Pancreas (tissue), 10 donors: ENCODE measurements at regions of chr12 and their contacts with region 1.

Region 1: GRCh38 chr12:14845350-14845750 is 2.0 kb upstream of the ART4 start:
- DNase-seq: peak in 2 of 6 donors; percentile 39 to 66
- ATAC-seq: peak; percentile 36 to 69 (median 64)
- H3K4me3 ChIP-seq: no peak overlapping the region
- H3K27ac ChIP-seq: peak overlapping the region in 2 of 4 donors; percentile 50 to 55
- H3K4me1 ChIP-seq: peaks cover 32 to 54% (median 44%) of the 10 kb centered on the region in 3 donors
- H3K27me3 ChIP-seq: no peaks in the 10 kb centered on the region
- CTCF ChIP-seq: peak; percentile 20 to 66 (median 47)

Region 2: GRCh38 chr12:14928969-14929368 is 83.6 kb after region 1 on chr12:
- intact Hi-C with region 1: loop called in 1 of 3 experiments (anchors 10 kb)
- DNase-seq: peak in 3 of 6 donors; percentile 53 to 70 (median 64)
- ATAC-seq: peak; percentile 81 to 91 (median 86)
- H3K4me3 ChIP-seq: peak overlapping the region in 1 of 4 donors; percentile 16
- H3K27ac ChIP-seq: peak overlapping the region in 3 of 4 donors; percentile 8 to 95 (median 93)
- H3K4me1 ChIP-seq: peaks cover 17 to 56% (median 42%) of the 10 kb centered on the region in 3 donors
- H3K27me3 ChIP-seq: no peaks in the 10 kb centered on the region
- CTCF ChIP-seq: no peak

Region 3: GRCh38 chr12:14948672-14949071 is 103.3 kb after region 1 on chr12:
- intact Hi-C with region 1: no loop called
- DNase-seq: peak in 1 of 6 donors; percentile 28
- ATAC-seq: peak; percentile 79 to 94 (median 90)
- H3K4me3 ChIP-seq: no peak overlapping the region
- H3K27ac ChIP-seq: peak overlapping the region in 3 of 4 donors; percentile 17 to 81 (median 69)
- H3K4me1 ChIP-seq: peaks cover 9 to 28% (median 13%) of the 10 kb centered on the region in 3 donors
- H3K27me3 ChIP-seq: no peaks in the 10 kb centered on the region
- CTCF ChIP-seq: no peak

Region 4: GRCh38 chr12:14989790-14990189 is 144.4 kb after region 1 on chr12:
- intact Hi-C with region 1: loop called (anchors 5 to 10 kb)
- DNase-seq: no peak
- ATAC-seq: no peak
- H3K4me3 ChIP-seq: no peak overlapping the region
- H3K27ac ChIP-seq: no peak overlapping the region
- H3K4me1 ChIP-seq: no peaks in the 10 kb centered on the region
- H3K27me3 ChIP-seq: no peaks in the 10 kb centered on the region
- CTCF ChIP-seq: no peak

Region 5: DNA sequence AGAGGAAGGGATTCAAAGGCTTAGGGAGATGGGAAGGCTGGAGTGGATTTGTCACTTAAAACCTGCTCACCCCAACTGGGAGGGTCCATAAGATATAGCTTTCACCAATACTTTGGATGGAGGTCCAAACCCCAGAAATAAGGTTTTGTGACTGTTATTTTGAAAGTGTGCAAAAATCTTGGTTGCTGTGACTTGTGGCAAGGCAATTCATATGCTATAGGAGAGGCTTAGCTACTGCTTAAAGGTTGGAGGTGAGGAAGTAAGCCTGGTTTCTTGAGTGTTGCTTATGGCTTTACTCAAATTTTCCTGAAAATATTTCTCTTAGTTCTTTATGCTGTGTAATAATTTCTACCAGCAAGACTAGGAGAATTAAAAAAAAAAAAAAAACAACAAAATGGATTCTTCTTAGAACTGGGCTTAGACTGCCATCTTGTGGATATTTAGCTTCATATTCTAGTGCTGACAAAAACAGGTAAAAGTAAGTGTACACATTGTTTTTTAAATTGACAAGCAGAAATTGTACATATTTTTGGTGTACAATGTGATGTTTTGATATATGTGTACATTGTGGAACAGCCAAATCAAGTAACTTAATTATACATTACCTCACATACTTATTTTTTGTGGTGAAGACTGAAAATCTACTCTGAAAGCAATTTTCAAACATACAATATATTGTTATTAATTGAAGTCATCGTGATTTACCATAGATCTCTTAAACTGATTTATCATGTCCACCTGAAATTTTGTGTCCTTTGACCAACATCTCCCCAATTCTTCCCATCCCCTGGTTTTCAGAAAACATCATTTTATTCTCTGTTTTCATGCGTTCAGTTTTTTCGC is 150.5 kb after region 1 on chr12:
- intact Hi-C with region 1: loop called in 2 of 3 experiments (anchors 5 to 10 kb)
- DNase-seq: no peak
- ATAC-seq: peak; percentile 72 to 90 (median 86)
- H3K4me3 ChIP-seq: no peak overlapping the region
- H3K27ac ChIP-seq: no peak overlapping the region
- H3K4me1 ChIP-seq: peaks cover 0 to 5% (median 0%) of the 10 kb centered on the region in 3 donors
- H3K27me3 ChIP-seq: no peaks in the 10 kb centered on the region
- CTCF ChIP-seq: peak; percentile 28 to 53 (median 40)

Region 6: GRCh38 chr12:15050659-15051058 is 205.3 kb after region 1 on chr12:
- intact Hi-C with region 1: no loop called
- DNase-seq: no peak
- ATAC-seq: no peak
- H3K4me3 ChIP-seq: no peak overlapping the region
- H3K27ac ChIP-seq: no peak overlapping the region
- H3K4me1 ChIP-seq: no peaks in the 10 kb centered on the region
- H3K27me3 ChIP-seq: no peaks in the 10 kb centered on the region
- CTCF ChIP-seq: no peak